ENCODE measurements at regions of chr7 and their contacts with region 1.

Region 1: GRCh38 chr7:99997545-99998137 is 17.8 kb upstream of the ZKSCAN1 start:
- DNase-seq: peak; percentile 19
- H3K4me3 Mint-ChIP-seq: peak overlapping the region; percentile 65
- H3K27ac Mint-ChIP-seq: peak overlapping the region; percentile 43
- H3K4me1 Mint-ChIP-seq: peaks cover 11% of the 10 kb centered on the region
- H3K27me3 Mint-ChIP-seq: peaks cover 13% of the 10 kb centered on the region
- CTCF ChIP-seq: peak; percentile 16

Region 2: DNA sequence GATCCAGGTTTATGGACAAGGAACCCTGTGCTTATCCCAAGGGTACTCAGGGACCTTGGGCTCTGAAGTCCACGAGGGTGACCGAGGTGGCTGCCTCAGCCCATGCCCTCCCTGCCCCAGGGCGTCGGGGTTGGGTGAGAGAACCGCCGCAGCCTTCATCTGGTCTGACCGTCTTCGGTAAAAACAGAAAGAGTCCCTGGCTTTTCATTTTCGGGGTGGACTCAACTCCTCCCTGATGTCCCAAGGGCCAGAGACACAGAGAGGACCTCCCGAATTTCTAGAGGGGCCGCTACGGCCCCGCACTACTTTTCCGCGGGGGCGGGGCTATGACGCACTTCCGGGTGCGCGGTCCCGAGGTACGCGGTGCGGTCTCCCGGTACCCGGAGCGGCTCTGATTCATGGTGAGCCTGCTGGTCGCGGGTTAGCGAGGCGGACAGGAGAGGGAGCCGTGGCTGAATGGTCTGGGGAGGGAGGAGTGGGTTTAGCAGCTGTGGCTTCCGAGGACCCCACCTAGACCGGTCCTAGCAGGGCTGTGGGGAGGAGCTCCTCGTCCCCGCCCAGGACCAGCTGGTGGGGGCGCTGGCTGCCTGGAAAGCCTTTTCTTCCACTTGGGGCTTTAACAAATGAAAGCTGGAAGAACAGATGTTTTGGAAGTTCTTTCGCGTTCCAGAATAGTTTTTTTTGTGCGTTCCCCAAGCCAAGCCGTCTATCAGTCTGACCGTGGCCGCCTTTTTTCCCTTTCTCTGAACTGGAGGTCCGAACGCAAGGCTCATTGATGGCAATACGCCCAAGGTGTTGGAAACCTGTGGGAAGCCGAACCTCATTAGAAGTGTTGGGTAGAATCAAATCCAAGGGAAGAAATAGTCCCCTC is 52.0 kb after region 1 on chr7 and contains the start of gene ZSCAN21:
- CTCF ChIA-PET with region 1: interaction called, 14 read pairs
- intact Hi-C with region 1: loop called (anchors 1 kb)
- DNase-seq: peak; percentile 79
- H3K4me3 Mint-ChIP-seq: peak within 1 kb of the TSS; percentile 74
- H3K27ac Mint-ChIP-seq: peak within 1 kb of the TSS; percentile 63
- H3K4me1 Mint-ChIP-seq: peaks cover 7% of the 10 kb centered on the region
- H3K27me3 Mint-ChIP-seq: no peaks in the 10 kb centered on the region
- CTCF ChIP-seq: no peak
- total RNA-seq, gene ZSCAN21: 5.5 and 5.7 TPM in 2 replicates

Region 3: GRCh38 chr7:100071018-100071723 is 73.5 kb after region 1 on chr7:
- CTCF ChIA-PET with region 1: no interaction called
- intact Hi-C with region 1: no loop called
- DNase-seq: no peak
- H3K4me3 Mint-ChIP-seq: no peak overlapping the region
- H3K27ac Mint-ChIP-seq: peak overlapping the region; percentile 7
- H3K4me1 Mint-ChIP-seq: no peaks in the 10 kb centered on the region
- H3K27me3 Mint-ChIP-seq: no peaks in the 10 kb centered on the region
- CTCF ChIP-seq: no peak

Region 4: DNA sequence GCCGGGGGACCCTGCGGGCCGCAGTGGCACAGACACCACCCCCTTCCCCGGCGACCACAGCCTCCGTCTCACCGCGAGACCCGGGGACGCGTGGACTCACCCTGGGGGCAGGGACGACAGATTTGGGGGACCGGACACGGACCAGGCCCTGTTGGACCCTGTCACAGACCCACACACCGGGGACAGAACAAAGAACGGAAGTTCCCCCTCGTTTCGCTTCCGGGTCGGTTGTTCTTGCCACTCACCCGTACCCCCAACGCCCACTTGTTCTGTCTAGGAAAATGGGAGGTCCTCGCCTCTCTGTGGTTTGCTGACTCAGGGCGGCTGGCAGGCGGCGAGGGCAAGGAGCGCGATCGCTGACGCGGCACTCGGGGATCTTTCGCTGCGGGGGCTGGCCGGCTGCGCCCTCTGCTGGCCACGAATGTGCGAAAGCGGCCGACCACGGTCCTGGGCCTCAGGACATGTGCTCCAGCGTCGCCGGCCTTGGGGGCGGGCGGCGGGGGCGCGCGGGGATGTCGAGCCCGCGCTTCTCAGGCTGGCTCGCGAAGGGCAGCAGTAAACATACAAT is 84.0 kb after region 1 on chr7 and contains the start of gene ZNF3:
- CTCF ChIA-PET with region 1: interaction called, 11 read pairs
- intact Hi-C with region 1: no loop called
- DNase-seq: peak; percentile 95
- H3K4me3 Mint-ChIP-seq: peak within 1 kb of the TSS; percentile 80
- H3K27ac Mint-ChIP-seq: peak within 1 kb of the TSS; percentile 85
- H3K4me1 Mint-ChIP-seq: peaks cover 11% of the 10 kb centered on the region
- H3K27me3 Mint-ChIP-seq: no peaks in the 10 kb centered on the region
- CTCF ChIP-seq: peak; percentile 69
- total RNA-seq, gene ZNF3: 26.7 TPM in 2 replicates

Measured in Calu3 (cell line).